ENCODE measurements at regions of chr1 and their contacts with region 1.

Region 1: DNA sequence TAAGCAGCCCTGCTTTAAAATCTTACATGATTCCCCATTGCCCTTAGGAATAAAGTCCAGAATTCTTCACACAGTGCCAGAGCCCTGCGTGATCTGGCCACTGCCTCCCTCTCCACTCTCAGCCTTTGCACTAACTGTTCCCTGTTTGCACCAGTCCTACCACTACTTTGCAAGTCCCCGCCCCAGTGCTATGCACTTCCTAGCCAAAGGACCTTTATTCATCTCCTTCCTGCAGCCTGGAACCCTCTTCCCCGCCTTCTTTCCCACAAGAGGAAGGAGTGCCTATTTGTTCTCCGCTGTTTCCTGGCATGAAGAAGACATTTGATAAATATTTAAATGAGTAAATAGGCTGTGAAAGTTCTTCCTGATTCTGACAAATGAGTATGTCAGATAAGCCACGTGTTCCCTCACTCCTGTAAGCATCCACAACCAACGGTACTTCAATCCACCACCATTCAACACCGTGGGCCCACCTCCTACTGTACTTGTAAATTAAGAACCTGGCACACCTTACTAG is 23.9 kb downstream of the CAPN8 start:
- DNase-seq: peak; percentile 30
- ATAC-seq: peak; percentile 76
- H3K4me3 ChIP-seq: no peak overlapping the region
- H3K27ac ChIP-seq: peak overlapping the region; percentile 8
- H3K4me1 ChIP-seq: peaks cover 42% of the 10 kb centered on the region
- H3K27me3 ChIP-seq: no peaks in the 10 kb centered on the region
- CTCF ChIP-seq: no peak

Region 2: GRCh38 chr1:223500560-223501425 is 140.8 kb before region 1 on chr1:
- CTCF ChIA-PET with region 1: no interaction called
- POLR2A ChIA-PET with region 1: no interaction called
- intact Hi-C with region 1: loop called (anchors 5 kb)
- DNase-seq: peak; percentile 99
- ATAC-seq: peak; percentile 88
- H3K4me3 ChIP-seq: no peak overlapping the region
- H3K27ac ChIP-seq: peak overlapping the region; percentile 96
- H3K4me1 ChIP-seq: peaks cover 39% of the 10 kb centered on the region
- H3K27me3 ChIP-seq: no peaks in the 10 kb centered on the region
- CTCF ChIP-seq: no peak

Region 3: DNA sequence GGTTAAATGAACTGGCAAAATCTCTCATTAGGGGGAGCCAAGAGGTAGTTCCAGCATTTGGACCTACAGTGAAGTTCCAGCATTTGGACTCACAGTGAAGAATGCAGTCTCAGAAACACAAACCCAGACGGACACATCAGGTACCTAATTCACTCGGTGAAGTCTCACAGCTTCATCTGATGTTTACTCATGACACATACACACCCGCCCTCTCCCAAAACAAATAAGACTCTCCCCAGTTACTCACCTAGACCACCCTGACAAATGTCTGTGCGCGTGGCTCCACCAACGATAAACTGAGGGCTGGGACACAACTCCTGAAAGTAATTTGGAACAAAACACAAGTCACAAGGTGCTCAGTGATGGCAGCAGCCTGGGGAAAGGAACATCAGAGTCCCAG is 12.5 kb after region 1 on chr1:
- CTCF ChIA-PET with region 1: no interaction called
- POLR2A ChIA-PET with region 1: no interaction called
- intact Hi-C with region 1: loop called (anchors 2 kb)
- DNase-seq: peak; percentile 85
- ATAC-seq: peak; percentile 71
- H3K4me3 ChIP-seq: peak overlapping the region; percentile 12; the same call in 1 of the 2 replicates
- H3K27ac ChIP-seq: peak overlapping the region; percentile 86
- H3K4me1 ChIP-seq: peaks cover 47% of the 10 kb centered on the region
- H3K27me3 ChIP-seq: no peaks in the 10 kb centered on the region
- CTCF ChIP-seq: 0 out of 2 replicates have a peak, but pooled peaks have one; percentile 19

Region 4: GRCh38 chr1:223748773-223749733 is 107.5 kb after region 1 on chr1:
- CTCF ChIA-PET with region 1: no interaction called
- POLR2A ChIA-PET with region 1: no interaction called
- intact Hi-C with region 1: no loop called
- DNase-seq: peak; percentile 56
- ATAC-seq: peak; percentile 25
- H3K4me3 ChIP-seq: no peak overlapping the region
- H3K27ac ChIP-seq: peak overlapping the region; percentile 69
- H3K4me1 ChIP-seq: peaks cover 22% of the 10 kb centered on the region
- H3K27me3 ChIP-seq: no peaks in the 10 kb centered on the region
- CTCF ChIP-seq: peak; percentile 95

Measured in PC-3 (cell line).